ENCODE measurements at regions of chr3 and their contacts with region 1.

Region 1: DNA sequence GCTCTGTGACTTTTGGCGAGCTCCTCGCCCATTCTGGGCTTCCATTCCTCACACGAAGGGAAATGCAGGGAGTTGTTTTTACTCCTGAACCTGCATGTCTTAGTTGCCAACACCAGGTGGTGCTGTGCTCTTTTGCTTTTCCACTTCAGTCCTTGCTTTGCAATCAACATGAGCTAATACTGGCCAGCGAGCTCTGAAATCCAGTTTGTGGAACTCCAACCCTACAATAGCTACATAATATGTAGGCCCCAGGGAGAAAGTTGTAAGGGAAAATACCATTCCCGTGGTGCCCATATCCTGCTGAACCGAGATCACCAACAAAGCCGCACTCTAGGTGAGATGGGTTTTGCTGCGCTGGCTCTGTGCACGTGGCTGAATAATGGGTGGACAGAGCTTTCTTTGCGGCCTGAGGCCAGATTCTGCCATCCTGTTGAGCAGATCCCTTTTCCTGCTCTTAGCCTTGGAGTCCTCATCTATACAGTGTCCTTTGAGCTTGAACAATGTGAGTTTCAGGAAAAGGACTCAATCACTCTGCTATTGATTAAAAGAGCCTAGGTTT is 25.0 kb downstream of the LSM3 start:
- DNase-seq: peak; percentile 48 to 75
- ATAC-seq: peak; percentile 74 to 80
- H3K4me3 ChIP-seq: no peak overlapping the region
- H3K27ac ChIP-seq: peak overlapping the region; percentile 82 to 90 (median 85)
- H3K4me1 ChIP-seq: peaks cover 6 to 23% of the 10 kb centered on the region in 2 donors
- H3K27me3 ChIP-seq: no peaks in the 10 kb centered on the region
- CTCF ChIP-seq: peak; percentile 79 to 93 (median 88)
- POLR2A ChIP-seq: no peak

Region 2: DNA sequence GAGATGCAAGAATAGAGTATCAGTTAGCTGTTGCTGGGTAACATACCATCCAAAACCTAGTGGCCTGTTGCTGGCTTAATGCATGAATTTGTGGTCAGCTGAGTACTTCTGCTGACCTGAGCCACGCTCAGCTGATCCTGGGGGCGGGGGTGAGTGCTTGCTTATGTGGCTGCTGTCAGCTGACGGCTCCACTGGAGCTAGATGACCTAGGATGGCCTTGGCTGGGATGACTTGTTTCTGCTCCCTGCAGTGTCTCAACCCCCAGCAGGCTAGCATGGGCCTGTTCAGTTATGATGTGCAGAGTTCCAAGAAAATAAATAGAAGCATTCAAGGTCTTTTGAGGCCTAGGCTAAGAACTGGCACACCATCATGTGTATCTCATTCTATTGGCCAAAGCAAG is 590.8 kb before region 1 on chr3:
- in situ Hi-C with region 1: no loop called
- intact Hi-C with region 1: no loop called
- DNase-seq: peak; percentile 77 to 86
- ATAC-seq: peak; percentile 82 to 89
- H3K4me3 ChIP-seq: no peak overlapping the region
- H3K27ac ChIP-seq: peak overlapping the region in 3 of 4 donors; percentile 7 to 52 (median 31)
- H3K4me1 ChIP-seq: no peaks in the 10 kb centered on the region
- H3K27me3 ChIP-seq: no peaks in the 10 kb centered on the region
- CTCF ChIP-seq: no peak
- POLR2A ChIP-seq: no peak

Region 3: GRCh38 chr3:13895155-13896105 is 308.2 kb before region 1 on chr3:
- in situ Hi-C with region 1: no loop called
- intact Hi-C with region 1: loop called (anchors 5 kb)
- DNase-seq: peak; percentile 77 to 86
- ATAC-seq: peak; percentile 88 to 89
- H3K4me3 ChIP-seq: peak overlapping the region; percentile 56 to 80 (median 66)
- H3K27ac ChIP-seq: peak overlapping the region; percentile 16 to 71 (median 49)
- H3K4me1 ChIP-seq: peaks cover 9 to 12% of the 10 kb centered on the region in 2 donors
- H3K27me3 ChIP-seq: peaks cover 0 to 2% (median 0%) of the 10 kb centered on the region in 3 donors
- CTCF ChIP-seq: no peak
- POLR2A ChIP-seq: peak; percentile 68 to 70

Region 4: DNA sequence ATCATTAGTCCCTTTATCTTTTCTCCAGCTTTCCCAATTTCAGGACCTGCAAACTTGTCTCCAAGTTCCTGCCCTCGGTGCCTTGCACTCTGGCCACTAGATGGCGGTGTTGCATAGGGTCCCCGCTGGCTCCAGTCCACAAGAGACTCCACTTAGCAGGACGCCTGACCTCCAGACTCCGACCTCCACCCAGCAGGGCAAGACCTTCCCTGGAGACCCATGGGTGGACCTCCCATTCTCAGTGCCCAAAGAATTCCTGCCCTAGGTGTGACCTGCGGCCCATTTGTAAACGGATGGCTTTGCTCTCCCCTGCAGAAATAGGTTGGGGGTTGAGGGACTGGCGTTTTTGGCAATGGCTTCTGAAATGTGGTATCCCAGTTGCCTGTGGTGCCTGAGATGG is 57.6 kb after region 1 on chr3:
- in situ Hi-C with region 1: loop called in 2 of 4 experiments (anchors 5 to 10 kb)
- intact Hi-C with region 1: loop called (anchors 1 kb)
- DNase-seq: peak; percentile 73 to 85
- ATAC-seq: peak; percentile 86 to 89
- H3K4me3 ChIP-seq: no peak overlapping the region
- H3K27ac ChIP-seq: no peak overlapping the region
- H3K4me1 ChIP-seq: peaks cover 2 to 9% of the 10 kb centered on the region in 2 donors
- H3K27me3 ChIP-seq: no peaks in the 10 kb centered on the region
- CTCF ChIP-seq: peak; percentile 94 to 99 (median 97)
- POLR2A ChIP-seq: no peak

Region 5: DNA sequence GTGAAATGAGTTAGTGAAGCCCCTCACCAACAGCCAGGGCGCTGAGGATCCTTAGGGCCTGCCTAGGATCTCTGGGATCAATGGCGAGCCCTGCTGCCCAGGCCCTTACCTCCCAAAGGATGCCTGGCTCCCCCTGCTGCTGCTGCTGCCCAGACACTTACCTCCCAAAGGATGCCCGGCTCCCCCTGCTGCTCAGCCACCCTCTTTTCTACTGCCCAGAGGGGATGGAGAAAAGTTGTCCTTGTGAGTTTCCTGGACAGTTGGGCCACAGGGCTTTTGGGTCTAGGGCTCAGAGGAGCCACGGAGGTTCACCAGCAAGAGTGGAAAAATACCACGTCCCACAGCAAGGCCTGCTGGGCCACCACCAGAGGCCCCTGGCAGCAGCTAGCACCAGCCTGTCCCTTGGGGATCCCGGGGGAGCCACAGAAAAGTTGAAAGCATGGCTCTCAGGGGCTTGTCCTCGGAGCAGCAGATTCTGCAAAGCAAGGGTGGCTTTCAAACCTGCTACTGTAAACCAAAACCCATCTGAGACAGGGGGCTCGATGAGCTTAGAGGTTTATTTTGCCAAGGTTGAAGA is 258.2 kb after region 1 on chr3:
- in situ Hi-C with region 1: loop called in 3 of 4 experiments (anchors 5 to 10 kb)
- intact Hi-C with region 1: loop called (anchors 2 kb)
- DNase-seq: no peak
- ATAC-seq: no peak
- H3K4me3 ChIP-seq: no peak overlapping the region
- H3K27ac ChIP-seq: no peak overlapping the region
- H3K4me1 ChIP-seq: peaks cover 11% of the 10 kb centered on the region in 2 donors
- H3K27me3 ChIP-seq: no peaks in the 10 kb centered on the region
- CTCF ChIP-seq: peak in 3 of 5 experiments; percentile 35 to 39 (median 39)
- POLR2A ChIP-seq: no peak

Region 6: GRCh38 chr3:14548321-14548729 is 344.7 kb after region 1 on chr3:
- in situ Hi-C with region 1: no loop called
- intact Hi-C with region 1: loop called (anchors 5 kb)
- DNase-seq: peak; percentile 49 to 76
- ATAC-seq: peak; percentile 86 to 94
- H3K4me3 ChIP-seq: no peak overlapping the region
- H3K27ac ChIP-seq: peak overlapping the region; percentile 15 to 57 (median 24)
- H3K4me1 ChIP-seq: peaks cover 11% of the 10 kb centered on the region in 2 donors
- H3K27me3 ChIP-seq: no peaks in the 10 kb centered on the region
- CTCF ChIP-seq: peak; percentile 74 to 92 (median 90)
- POLR2A ChIP-seq: no peak